SK-N-SH (cell line): ENCODE measurements at regions of chr21 and their contacts with region 1.

Region 1: GRCh38 chr21:31786164-31786920 is 54.4 kb upstream of the SCAF4 start:
- DNase-seq: no peak
- H3K4me3 ChIP-seq: peak overlapping the region in 1 of 2 experiments; percentile 32; a peak in 1 of 4 replicates
- H3K27ac ChIP-seq: no peak overlapping the region
- H3K4me1 ChIP-seq: no peaks in the 10 kb centered on the region; a peak in 1 of 4 replicates
- H3K27me3 ChIP-seq: no peaks in the 10 kb centered on the region
- CTCF ChIP-seq: no peak; the same call in 1 of the 2 replicates
- EP300 ChIP-seq: no peak
- RAD21 ChIP-seq: no peak

Region 2: DNA sequence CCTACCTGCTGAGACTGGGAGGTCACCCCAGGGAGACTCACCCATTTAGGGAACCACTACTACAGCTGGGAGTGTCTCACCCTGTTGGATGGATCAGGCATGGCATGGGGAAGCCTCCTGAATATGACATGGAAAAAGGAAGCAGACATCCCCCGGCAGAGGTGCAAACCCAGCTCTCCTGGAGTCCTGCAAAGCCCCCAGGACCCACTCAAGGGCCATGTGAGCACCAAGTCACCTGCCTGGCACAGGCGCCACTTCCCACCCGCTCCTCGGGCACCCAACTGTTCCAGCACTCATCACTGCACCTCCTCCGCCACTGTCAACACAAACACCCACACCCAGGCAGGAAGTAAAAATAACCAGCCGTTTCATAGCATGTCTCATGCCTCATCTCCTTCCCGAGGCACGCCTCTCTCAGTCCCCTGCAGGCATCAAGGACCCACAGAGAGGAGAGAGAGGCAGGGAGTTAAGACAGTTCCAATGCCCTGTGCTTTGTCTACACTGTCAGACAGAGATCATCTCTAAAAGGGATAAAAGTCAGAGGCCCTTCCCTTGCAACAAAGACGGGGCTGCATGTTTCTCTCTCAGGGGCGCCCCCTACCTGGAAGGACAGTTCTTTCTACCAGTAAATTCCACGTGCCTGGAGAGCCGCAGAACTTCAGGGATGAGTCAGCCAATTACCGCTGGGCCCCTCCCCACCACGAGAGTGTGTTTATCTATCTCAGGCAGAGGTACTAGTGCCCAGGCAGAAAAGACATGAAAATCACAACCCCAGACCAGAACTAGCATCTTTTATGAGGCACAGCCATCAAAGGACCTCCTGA is 276.9 kb before region 1 on chr21:
- CTCF ChIA-PET with region 1: no interaction called
- POLR2A ChIA-PET with region 1: no interaction called
- DNase-seq: no peak
- H3K4me3 ChIP-seq: no peak overlapping the region; a peak in 1 of 4 replicates
- H3K27ac ChIP-seq: no peak overlapping the region
- H3K4me1 ChIP-seq: peaks cover 0 to 2% of the 10 kb centered on the region in 2 experiments; a peak in 1 of 4 replicates
- H3K27me3 ChIP-seq: no peaks in the 10 kb centered on the region
- CTCF ChIP-seq: peak; percentile 23; the same call in 1 of the 2 replicates
- EP300 ChIP-seq: no peak
- RAD21 ChIP-seq: no peak

Region 3: DNA sequence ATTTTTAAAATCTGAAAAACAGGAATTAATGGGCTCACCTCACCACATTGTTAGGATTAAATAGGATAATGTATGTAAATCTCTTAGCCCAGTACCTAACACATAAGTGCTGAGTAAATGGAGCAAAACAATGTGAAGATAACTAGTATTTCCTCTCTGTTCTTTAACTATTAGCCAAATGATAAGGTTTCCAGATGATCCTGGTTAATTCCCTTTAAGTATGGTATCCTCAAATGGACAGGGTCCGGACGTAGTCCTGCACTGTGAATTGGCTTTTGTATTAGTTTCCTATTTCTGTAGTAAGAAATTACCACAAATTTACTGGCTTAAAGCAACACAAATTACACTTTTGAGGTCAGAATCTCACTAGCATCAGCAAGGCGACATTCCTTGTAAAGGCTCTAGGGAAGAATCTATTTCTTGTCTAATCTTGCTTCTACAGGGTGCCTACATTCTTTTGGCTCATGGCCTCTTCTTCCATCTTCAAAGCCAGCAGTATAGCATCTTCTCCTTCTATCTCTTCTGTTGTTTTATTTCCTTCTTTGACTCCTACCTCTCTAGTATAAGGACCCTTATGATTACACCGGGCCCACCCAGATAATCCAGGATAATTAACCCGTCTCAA is 71.5 kb before region 1 on chr21:
- CTCF ChIA-PET with region 1: no interaction called
- POLR2A ChIA-PET with region 1: no interaction called
- DNase-seq: no peak
- H3K4me3 ChIP-seq: no peak overlapping the region
- H3K27ac ChIP-seq: peak overlapping the region; percentile 18 to 39
- H3K4me1 ChIP-seq: peaks cover 4 to 30% of the 10 kb centered on the region in 2 experiments; a peak in 3 of 4 replicates
- H3K27me3 ChIP-seq: no peaks in the 10 kb centered on the region
- CTCF ChIP-seq: no peak
- EP300 ChIP-seq: no peak
- RAD21 ChIP-seq: no peak

Region 4: GRCh38 chr21:31798842-31799704 is 12.7 kb after region 1 on chr21:
- CTCF ChIA-PET with region 1: interaction called, 10 read pairs
- POLR2A ChIA-PET with region 1: no interaction called
- DNase-seq: no peak
- H3K4me3 ChIP-seq: no peak overlapping the region
- H3K27ac ChIP-seq: no peak overlapping the region
- H3K4me1 ChIP-seq: no peaks in the 10 kb centered on the region; a peak in 1 of 4 replicates
- H3K27me3 ChIP-seq: no peaks in the 10 kb centered on the region
- CTCF ChIP-seq: no peak
- EP300 ChIP-seq: no peak
- RAD21 ChIP-seq: no peak

Region 5: GRCh38 chr21:31837618-31838390 is 51.5 kb after region 1 on chr21:
- CTCF ChIA-PET with region 1: interaction called, 10 read pairs
- POLR2A ChIA-PET with region 1: no interaction called
- DNase-seq: no peak
- H3K4me3 ChIP-seq: no peak overlapping the region
- H3K27ac ChIP-seq: no peak overlapping the region
- H3K4me1 ChIP-seq: no peaks in the 10 kb centered on the region
- H3K27me3 ChIP-seq: no peaks in the 10 kb centered on the region
- CTCF ChIP-seq: no peak
- EP300 ChIP-seq: no peak
- RAD21 ChIP-seq: no peak

Region 6: DNA sequence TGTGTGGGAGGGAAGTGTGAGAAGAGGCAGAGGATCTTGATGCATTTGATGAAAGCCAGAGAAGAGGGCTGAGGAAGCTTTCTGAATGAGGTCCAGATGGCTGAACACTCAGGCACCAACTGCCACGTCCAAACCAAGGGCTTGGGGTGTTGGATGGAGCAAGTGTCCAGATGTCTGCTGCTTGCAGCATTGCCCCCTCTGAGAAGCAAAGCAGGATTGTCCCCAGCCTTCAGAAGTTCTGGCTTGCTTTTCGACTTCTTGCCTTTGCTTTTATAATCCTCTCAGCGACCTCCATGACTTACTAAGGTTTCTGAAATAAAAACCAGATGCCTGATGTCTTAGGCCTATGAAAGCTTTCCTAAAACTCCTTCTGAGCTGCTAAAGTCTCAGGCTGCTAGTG is 269.0 kb after region 1 on chr21:
- CTCF ChIA-PET with region 1: no interaction called
- POLR2A ChIA-PET with region 1: no interaction called
- DNase-seq: no peak
- H3K4me3 ChIP-seq: no peak overlapping the region
- H3K27ac ChIP-seq: no peak overlapping the region
- H3K4me1 ChIP-seq: no peaks in the 10 kb centered on the region
- H3K27me3 ChIP-seq: no peaks in the 10 kb centered on the region
- CTCF ChIP-seq: no peak
- EP300 ChIP-seq: no peak
- RAD21 ChIP-seq: no peak

Region 7: GRCh38 chr21:32494934-32495703 is 708.8 kb after region 1 on chr21:
- CTCF ChIA-PET with region 1: no interaction called
- POLR2A ChIA-PET with region 1: no interaction called
- DNase-seq: no peak
- H3K4me3 ChIP-seq: no peak overlapping the region
- H3K27ac ChIP-seq: peak overlapping the region in 1 of 2 experiments; percentile 98; a peak in 2 of 4 replicates
- H3K4me1 ChIP-seq: peaks cover 0 to 51% of the 10 kb centered on the region in 2 experiments; a peak in 2 of 4 replicates
- H3K27me3 ChIP-seq: no peaks in the 10 kb centered on the region
- CTCF ChIP-seq: no peak
- EP300 ChIP-seq: peak in 1 of 2 experiments; percentile 95; a peak in 3 of 4 replicates
- RAD21 ChIP-seq: no peak